Head of caudate nucleus (tissue), 42 donors: ENCODE measurements at regions of chr17 and their contacts with region 1.

Region 1: GRCh38 chr17:76467366-76467765 is at the start of gene AANAT:
- DNase-seq: no peak

Region 2: DNA sequence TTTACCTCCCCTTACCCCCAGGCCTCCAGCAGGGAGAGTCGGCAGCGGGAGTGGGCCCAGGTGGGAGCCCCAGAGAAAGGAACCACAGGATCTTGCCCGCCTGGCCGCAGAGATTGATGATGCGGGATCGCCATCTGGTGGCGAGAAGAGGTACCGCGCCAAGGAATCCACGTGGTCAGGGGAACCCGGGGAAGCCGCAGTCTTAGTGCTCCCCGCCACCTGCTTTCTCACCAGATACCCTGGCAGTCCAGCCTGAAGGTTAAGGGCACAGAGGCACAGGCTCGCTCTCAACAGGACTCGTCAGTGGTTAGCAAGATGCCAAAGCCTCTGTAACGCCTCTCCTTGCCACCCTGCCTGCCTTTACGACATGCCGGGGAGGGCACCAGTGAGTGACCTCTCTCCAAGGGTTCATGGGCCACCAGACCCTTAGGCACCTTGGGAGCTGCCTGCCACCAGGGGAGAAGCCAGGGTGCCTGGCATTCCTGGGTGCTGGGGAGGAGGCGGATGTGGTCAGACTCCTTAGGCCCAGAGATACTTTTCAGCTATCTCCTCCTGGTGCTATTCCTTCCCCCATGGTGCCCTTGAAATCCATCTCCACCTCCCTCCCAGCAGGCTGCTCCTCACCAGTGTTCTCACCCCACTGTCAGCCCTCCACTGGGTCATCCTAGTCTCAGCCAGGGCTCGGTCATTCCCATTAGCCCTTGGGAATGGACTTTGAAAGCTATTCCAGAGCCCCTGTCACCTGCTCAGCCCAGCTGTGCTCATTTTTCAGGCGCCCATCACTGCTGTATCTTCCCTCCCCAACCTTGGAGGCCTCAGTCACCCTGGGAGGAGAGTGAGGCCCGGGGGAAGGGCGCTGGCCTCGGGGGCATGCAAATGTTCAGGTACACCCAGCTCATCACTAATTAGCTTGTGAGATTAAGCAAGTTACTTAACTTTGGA is 39.3 kb after region 1 on chr17:
- intact Hi-C with region 1: loop called (anchors 2 kb)
- DNase-seq: peak; percentile 60 to 95 (median 88)